Motor neuron (in vitro differentiated cells): ENCODE measurements at regions of chr16 and their contacts with region 1.

Region 1: GRCh38 chr16:48385272-48386150 is at the start of gene SIAH1:
- ATAC-seq: peak; percentile 72 to 86 (median 79)
- H3K4me3 ChIP-seq: peak within 1 kb of the TSS; percentile 61 to 90 (median 73)
- H3K27ac ChIP-seq: peak within 1 kb of the TSS; percentile 98 to 99
- H3K4me1 ChIP-seq: peaks cover 0 to 12% of the 10 kb centered on the region in 2 donors
- total RNA-seq, gene SIAH1: 9.0 to 46.2 (median 37.9) TPM

Region 2: DNA sequence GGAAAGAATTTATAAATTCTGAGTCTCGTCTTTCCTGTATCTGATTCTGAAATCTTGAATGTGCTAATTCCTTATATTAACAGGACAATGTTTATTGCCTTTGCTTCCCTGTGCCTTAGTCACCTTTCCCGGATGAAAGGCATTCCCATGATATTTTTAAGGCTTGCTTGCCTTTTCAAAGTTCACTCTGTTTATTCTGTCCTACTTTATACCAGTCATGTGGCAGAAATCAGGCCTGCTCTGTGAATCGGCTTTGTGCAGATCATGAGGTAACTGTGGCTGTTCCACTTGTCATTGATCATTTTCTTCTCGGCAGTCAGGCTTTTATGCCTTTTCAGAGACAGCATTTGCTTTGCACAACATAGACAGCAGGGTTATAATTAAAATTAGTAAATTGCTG is 109.4 kb before region 1 on chr16:
- in situ Hi-C with region 1: loop called in 1 of 9 experiments (anchors 25 kb)
- ATAC-seq: peak in 5 of 8 experiments; percentile 73 to 95 (median 82)
- H3K4me3 ChIP-seq: no peak overlapping the region
- H3K27ac ChIP-seq: peak overlapping the region in 1 of 2 donors; percentile 26
- H3K4me1 ChIP-seq: peaks cover 7 to 11% of the 10 kb centered on the region in 2 donors

Region 3: GRCh38 chr16:48434653-48435317 is 49.3 kb after region 1 on chr16:
- in situ Hi-C with region 1: no loop called
- ATAC-seq: no peak
- H3K4me3 ChIP-seq: no peak overlapping the region
- H3K27ac ChIP-seq: no peak overlapping the region
- H3K4me1 ChIP-seq: no peaks in the 10 kb centered on the region

Region 4: DNA sequence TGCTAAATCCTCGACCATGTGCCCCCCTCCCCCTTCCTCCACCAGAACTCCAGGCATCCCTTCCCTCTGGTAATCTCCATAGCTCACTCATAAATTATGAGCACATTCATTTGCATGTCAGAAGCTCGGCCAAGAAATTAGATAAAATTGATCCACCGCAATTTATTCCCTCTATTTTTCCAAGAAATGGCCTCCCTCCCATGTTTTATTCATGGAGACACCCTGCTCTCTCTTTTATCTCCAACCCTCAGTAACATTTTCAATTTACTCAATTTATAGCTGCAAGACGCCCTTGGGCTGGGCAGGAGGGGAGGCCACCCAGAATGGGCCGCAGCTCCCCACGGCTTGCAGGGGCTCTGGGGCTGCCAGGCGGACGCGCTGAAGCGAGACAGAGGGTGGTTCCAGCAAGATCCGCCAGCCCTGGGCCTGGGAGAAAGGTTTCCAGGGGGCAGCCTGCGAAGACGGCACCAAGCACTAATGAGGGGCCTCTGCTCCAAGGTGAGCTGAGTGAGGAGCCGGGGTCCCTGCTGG is 1525.1 kb after region 1 on chr16:
- in situ Hi-C with region 1: no loop called
- ATAC-seq: peak; percentile 71 to 93 (median 90)
- H3K4me3 ChIP-seq: no peak overlapping the region
- H3K27ac ChIP-seq: peak overlapping the region; percentile 76 to 84
- H3K4me1 ChIP-seq: peaks cover 16 to 23% of the 10 kb centered on the region in 2 donors